Activated CD8-positive, alpha-beta T cell treated with anti-CD3 and anti-CD28 coated beads, Interleukin-2, amount 10 ng/mL, durations not matched to agents 7 days and 5 days (primary cell): ENCODE measurements at regions of chr3 and their contacts with region 1.

Region 1: GRCh38 chr3:13461169-13462158 is 18.6 kb upstream of the HDAC11 start:
- DNase-seq: peak; percentile 85
- ATAC-seq: peak; percentile 96
- H3K4me3 Mint-ChIP-seq: no peak overlapping the region
- H3K27ac Mint-ChIP-seq: no peak overlapping the region
- H3K4me1 Mint-ChIP-seq: no peaks in the 10 kb centered on the region
- H3K27me3 Mint-ChIP-seq: peaks cover 10% of the 10 kb centered on the region

Region 2: DNA sequence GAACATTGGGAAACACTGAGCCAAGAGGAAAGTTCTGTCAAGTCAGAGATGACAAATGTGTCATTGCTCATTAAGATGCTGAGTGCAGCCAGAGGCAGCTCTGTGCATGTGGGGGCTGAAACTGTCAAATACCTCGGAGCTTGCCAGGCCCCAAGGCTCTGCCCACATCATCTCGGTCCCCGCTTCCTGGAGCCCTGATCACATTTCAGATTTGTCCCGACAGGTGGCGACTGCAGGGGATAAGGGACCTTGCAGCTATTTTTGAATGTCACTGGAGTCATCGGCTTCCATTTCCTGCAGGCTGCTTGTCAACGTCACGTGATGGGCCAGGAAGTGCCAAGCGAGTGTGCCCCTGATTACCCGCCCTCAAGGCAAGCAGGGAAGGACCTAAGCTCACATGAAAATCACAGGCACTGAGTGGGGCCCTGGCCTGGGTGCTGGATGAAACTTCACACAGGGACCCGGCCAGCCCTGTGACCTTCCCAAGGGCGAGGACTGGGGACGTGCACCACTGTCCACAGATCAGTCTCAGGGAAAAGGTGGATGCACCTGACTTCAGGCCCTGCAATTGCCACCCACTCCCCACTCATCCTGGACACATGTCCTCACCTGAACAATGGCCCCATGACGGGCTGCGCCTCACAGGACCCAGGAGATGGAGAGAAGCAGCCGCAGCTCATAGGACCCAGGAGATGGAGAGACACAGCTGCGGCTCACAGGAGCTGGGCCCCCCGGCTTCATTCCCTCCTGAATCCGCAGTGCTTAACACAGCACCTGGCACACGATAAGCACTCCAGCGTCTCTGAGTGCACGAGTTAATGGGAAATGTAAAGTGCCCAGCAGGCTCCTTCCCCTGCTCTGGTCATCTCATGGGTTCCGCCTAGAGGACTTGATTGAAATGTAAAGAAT is 114.7 kb before region 1 on chr3:
- CTCF ChIA-PET with region 1: interaction called, 168 read pairs
- POLR2A ChIA-PET with region 1: no interaction called
- DNase-seq: peak; percentile 87
- ATAC-seq: peak; percentile 80
- H3K4me3 Mint-ChIP-seq: peak overlapping the region; percentile 20
- H3K27ac Mint-ChIP-seq: peak overlapping the region; percentile 91
- H3K4me1 Mint-ChIP-seq: peaks cover 72% of the 10 kb centered on the region
- H3K27me3 Mint-ChIP-seq: no peaks in the 10 kb centered on the region

Region 3: GRCh38 chr3:13371100-13372075 is 90.1 kb before region 1 on chr3:
- CTCF ChIA-PET with region 1: no interaction called
- POLR2A ChIA-PET with region 1: no interaction called
- DNase-seq: no peak
- ATAC-seq: no peak
- H3K4me3 Mint-ChIP-seq: no peak overlapping the region
- H3K27ac Mint-ChIP-seq: peak overlapping the region; percentile 20
- H3K4me1 Mint-ChIP-seq: no peaks in the 10 kb centered on the region
- H3K27me3 Mint-ChIP-seq: no peaks in the 10 kb centered on the region

Region 4: DNA sequence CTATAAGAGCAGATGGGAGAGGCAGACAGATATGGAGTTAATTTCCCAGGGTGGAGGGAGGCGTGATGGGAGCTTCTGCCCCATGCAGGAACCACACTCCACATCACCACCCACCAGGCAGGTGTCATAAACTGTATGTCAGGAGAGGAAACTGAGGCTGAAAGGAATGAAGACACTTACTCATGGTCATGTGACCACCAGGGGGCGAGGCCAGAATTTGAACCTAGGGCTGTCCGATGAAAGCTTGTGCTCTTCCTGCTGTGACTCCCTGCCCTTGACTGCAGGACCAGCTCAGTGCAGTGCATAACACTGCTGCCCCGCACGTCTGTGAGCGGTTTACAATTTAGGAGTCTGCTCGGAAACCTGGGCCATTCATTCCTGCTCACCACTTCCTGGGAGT is 70.2 kb before region 1 on chr3:
- CTCF ChIA-PET with region 1: no interaction called
- POLR2A ChIA-PET with region 1: no interaction called
- DNase-seq: no peak
- ATAC-seq: peak; percentile 24
- H3K4me3 Mint-ChIP-seq: no peak overlapping the region
- H3K27ac Mint-ChIP-seq: no peak overlapping the region
- H3K4me1 Mint-ChIP-seq: peaks cover 27% of the 10 kb centered on the region
- H3K27me3 Mint-ChIP-seq: no peaks in the 10 kb centered on the region

Region 5: DNA sequence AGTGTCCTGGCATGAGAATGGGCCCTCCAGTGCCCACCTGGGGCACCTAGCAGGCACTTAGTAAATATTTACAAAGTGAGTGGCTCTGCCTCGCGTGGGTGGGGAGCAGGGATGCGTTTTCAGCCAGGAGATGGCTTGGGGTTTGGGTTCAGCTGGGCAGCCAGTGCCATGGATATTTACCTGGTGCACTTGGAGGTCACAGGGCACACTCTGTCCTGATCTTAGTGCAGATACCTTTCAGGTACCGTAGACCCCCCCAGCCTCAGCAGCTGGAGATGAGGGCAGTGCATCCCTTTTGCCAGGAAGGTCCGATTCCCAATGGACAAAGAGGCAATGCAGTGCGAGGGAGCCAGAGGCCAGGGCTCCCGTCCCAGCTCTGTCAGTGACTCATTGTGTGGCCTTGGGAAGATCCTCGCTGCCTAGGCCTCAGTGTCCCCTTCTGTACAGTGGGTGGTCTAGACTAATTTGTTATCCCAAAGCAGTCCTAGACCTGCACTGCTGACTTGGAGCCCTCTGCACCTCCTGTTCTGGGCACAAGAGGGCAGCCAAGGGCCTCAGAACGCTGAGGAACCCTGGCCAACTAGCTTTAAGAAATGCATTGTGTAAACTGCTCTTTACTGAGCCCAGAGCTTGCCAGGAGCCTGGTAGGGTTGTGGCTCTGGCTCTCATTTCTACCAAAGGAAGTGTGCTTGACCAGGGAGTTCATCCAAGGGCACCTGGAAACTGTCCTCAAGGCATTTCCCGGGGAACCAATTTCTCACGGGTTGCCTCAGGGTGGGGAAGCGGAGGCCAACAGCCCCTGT is 34.7 kb after region 1 on chr3:
- CTCF ChIA-PET with region 1: no interaction called
- POLR2A ChIA-PET with region 1: no interaction called
- DNase-seq: peak; percentile 84
- ATAC-seq: peak; percentile 83
- H3K4me3 Mint-ChIP-seq: no peak overlapping the region
- H3K27ac Mint-ChIP-seq: no peak overlapping the region
- H3K4me1 Mint-ChIP-seq: peaks cover 9% of the 10 kb centered on the region
- H3K27me3 Mint-ChIP-seq: no peaks in the 10 kb centered on the region